Caco-2 (cell line): ENCODE measurements at regions of chr4 and their contacts with region 1.

Region 1: DNA sequence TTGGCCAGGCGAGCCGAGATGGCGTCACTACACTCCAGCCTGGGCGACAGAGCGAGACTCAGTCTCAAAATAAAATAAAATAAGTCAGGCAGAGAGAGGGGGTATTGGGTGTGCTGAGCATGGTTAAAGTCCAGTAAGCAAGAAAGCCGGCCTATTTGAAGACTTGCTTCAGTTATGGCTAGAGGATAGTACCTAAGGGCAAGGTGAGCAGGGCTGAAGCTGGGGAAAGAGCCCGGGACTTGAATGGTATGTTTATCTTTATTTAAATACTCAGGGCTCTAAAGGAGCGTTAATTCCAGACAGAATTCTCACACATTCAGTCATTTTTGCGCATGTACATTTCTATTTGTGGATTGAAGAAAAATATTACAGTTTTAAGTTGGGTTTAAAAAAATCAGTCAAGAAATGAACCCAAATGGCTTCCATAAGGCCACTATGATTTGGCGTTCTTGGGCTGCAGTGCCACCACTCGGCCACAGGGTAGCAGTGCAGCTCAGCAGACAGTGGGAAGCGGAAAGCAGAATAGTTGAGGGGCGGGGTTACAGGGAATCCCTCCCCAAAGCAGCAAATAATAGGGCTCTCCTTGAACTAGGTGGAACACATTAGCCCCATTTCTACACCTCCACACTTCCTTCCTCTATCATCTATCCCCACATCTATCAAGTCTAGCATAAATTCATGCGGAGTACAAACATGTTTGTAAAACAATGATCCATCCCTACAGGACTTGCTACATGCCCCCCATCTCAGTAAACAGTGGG is 37.2 kb upstream of the SH3D19 start:
- DNase-seq: peak; percentile 86 to 88
- H3K4me3 ChIP-seq: no peak overlapping the region
- H3K4me3 Mint-ChIP-seq: no peak overlapping the region
- H3K27ac Mint-ChIP-seq: no peak overlapping the region
- H3K4me1 ChIP-seq: no peaks in the 10 kb centered on the region
- H3K4me1 Mint-ChIP-seq: peaks cover 12% of the 10 kb centered on the region
- H3K27me3 ChIP-seq: no peaks in the 10 kb centered on the region
- H3K27me3 Mint-ChIP-seq: no peaks in the 10 kb centered on the region
- CTCF ChIP-seq: peak; percentile 90 to 97

Region 2: GRCh38 chr4:150583287-150584110 is 779.1 kb before region 1 on chr4:
- CTCF ChIA-PET with region 1: no interaction called
- POLR2A ChIA-PET with region 1: no interaction called
- intact Hi-C with region 1: no loop called
- DNase-seq: no peak
- H3K4me3 ChIP-seq: no peak overlapping the region
- H3K4me3 Mint-ChIP-seq: no peak overlapping the region
- H3K27ac Mint-ChIP-seq: no peak overlapping the region
- H3K4me1 ChIP-seq: no peaks in the 10 kb centered on the region
- H3K4me1 Mint-ChIP-seq: no peaks in the 10 kb centered on the region
- H3K27me3 ChIP-seq: no peaks in the 10 kb centered on the region
- H3K27me3 Mint-ChIP-seq: no peaks in the 10 kb centered on the region
- CTCF ChIP-seq: no peak

Region 3: DNA sequence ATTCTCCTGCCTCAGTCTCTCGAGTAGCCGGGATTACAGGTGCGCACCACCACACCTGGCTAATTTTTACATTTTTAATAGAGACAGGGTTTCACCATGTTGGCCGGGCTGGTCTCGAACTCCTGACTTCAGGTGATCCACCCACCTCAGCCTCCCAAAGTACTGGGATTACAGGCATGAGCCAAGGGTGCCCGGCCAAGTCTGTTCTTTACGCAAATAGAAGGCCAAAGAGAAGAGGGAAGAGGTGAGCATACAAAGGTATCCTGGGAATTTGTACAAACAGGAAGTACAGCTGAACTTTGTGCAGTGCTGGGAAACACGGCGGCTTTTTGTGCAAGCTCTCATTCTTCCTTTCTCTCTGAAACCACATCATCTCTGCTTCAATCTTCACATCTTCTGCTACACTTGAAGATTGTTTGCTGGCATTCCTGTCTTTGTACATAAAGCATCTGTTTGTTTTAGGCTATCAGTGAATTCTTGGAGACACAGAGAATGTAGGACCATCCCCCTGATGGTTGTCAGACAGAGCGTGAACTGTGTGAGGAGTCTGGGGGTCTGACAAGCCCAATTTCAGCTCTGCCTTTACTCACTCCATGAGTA is 157.6 kb before region 1 on chr4:
- CTCF ChIA-PET with region 1: no interaction called
- POLR2A ChIA-PET with region 1: no interaction called
- intact Hi-C with region 1: loop called (anchors 1 kb)
- DNase-seq: peak; percentile 70 to 79
- H3K4me3 ChIP-seq: no peak overlapping the region; the same call in 1 of the 2 replicates
- H3K4me3 Mint-ChIP-seq: peak overlapping the region; percentile 67
- H3K27ac Mint-ChIP-seq: peak overlapping the region; percentile 79
- H3K4me1 ChIP-seq: peaks cover 57% of the 10 kb centered on the region
- H3K4me1 Mint-ChIP-seq: peaks cover 23% of the 10 kb centered on the region
- H3K27me3 ChIP-seq: no peaks in the 10 kb centered on the region
- H3K27me3 Mint-ChIP-seq: no peaks in the 10 kb centered on the region
- CTCF ChIP-seq: no peak

Region 4: DNA sequence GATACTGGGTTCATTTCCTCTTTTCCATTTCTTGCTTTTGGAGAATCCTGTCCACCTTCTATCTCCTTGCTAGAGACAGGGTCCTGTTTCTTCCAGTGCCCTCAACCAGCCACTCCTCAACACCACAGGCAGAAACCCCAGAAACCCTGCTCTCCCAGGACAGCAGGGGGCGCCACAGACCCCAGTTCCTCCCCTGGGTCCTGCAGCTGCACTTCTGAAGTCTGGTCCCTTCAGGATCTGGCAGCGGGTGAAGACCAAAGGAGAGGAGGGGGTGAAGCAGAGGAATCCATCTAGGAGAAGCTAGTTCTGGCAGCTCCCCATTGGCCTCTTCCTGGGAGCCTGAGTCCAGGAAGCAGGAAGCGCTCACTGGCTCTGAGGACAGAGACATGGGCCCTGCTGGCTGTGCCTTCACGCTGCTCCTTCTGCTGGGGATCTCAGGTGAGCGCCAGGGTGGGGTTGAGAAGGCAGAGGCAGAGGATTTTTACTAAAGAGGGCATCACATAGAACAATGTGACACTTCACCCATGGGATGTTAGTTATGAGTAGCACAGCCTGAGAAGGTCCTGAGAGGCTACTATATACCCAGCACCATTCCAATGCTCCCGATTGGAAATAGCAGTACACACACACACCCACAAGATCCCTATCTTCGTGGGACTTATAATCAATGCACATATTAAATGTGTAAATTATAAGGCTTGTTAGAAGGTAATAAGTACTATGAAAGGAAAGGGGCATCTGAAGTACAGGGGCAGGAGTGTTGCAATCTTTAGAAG is 85.6 kb before region 1 on chr4 and contains the start of gene PRSS48:
- CTCF ChIA-PET with region 1: interaction called, 9 read pairs
- POLR2A ChIA-PET with region 1: no interaction called
- intact Hi-C with region 1: loop called (anchors 1 kb)
- DNase-seq: peak; percentile 74 to 85
- H3K4me3 ChIP-seq: no peak within 1 kb of the TSS
- H3K4me3 Mint-ChIP-seq: no peak within 1 kb of the TSS
- H3K27ac Mint-ChIP-seq: peak within 1 kb of the TSS; percentile 49
- H3K4me1 ChIP-seq: peaks cover 9% of the 10 kb centered on the region
- H3K4me1 Mint-ChIP-seq: peaks cover 33% of the 10 kb centered on the region
- H3K27me3 ChIP-seq: no peaks in the 10 kb centered on the region
- H3K27me3 Mint-ChIP-seq: no peaks in the 10 kb centered on the region
- CTCF ChIP-seq: peak; percentile 75 to 80
- total RNA-seq, gene PRSS48: not detected in 2 replicates

Region 5: DNA sequence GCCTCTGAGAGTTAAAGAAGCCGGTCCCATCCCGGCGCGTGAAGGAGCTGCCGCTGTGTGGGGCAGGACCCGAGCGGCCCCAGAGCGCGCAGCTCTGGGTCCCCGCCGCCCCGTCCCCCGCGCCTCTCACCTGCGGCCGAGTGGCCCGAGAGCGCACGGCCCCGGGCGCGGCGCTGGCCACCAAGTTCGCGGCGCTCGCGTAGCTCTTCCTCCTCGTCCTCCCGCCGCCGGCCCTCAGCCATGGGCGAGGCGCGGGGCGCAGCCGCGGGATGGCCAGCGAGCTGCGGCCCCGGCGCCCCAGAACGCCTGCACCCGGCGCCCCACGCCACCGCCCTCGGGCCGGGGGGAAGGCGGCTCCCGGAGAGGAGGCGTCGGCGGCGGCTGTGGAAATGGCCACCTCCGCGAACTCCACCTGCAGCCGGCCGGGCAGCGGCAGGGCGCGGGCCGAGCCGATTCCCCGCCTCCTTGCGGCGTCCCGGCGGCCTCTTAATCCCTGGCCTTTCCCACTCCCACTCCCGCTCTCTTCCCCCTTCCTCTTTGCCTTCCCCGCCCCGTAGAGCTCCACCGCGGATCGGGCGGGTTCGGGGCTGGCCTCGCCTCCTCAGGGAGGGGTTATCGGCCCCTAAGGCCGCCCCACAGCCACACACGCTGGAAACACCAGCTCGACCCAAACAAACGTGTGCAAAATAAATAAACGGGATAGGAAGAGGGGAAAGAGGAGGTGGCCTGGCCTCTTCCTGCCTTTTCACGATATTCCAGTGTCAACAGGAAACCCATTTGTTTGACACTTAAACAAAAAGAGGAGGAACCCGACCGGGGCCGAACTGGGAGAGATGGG is 37.3 kb before region 1 on chr4 and contains the start of gene SH3D19:
- CTCF ChIA-PET with region 1: interaction called, 8 read pairs
- POLR2A ChIA-PET with region 1: interaction called, 6 read pairs
- intact Hi-C with region 1: loop called (anchors 1 kb)
- DNase-seq: peak; percentile 88 to 90
- H3K4me3 ChIP-seq: peak within 1 kb of the TSS; percentile 59
- H3K4me3 Mint-ChIP-seq: peak within 1 kb of the TSS; percentile 86
- H3K27ac Mint-ChIP-seq: peak within 1 kb of the TSS; percentile 89
- H3K4me1 ChIP-seq: peaks cover 31% of the 10 kb centered on the region
- H3K4me1 Mint-ChIP-seq: peaks cover 34% of the 10 kb centered on the region
- H3K27me3 ChIP-seq: no peaks in the 10 kb centered on the region
- H3K27me3 Mint-ChIP-seq: no peaks in the 10 kb centered on the region
- CTCF ChIP-seq: no peak
- total RNA-seq, gene SH3D19: 57.2 and 57.8 TPM in 2 replicates

Region 6: GRCh38 chr4:151408630-151409469 is 46.3 kb after region 1 on chr4 and contains the start of gene FHIP1A:
- CTCF ChIA-PET with region 1: no interaction called
- POLR2A ChIA-PET with region 1: no interaction called
- intact Hi-C with region 1: loop called (anchors 1 kb)
- DNase-seq: peak; percentile 95 to 96
- H3K4me3 ChIP-seq: peak within 1 kb of the TSS; percentile 80
- H3K4me3 Mint-ChIP-seq: peak within 1 kb of the TSS; percentile 86
- H3K27ac Mint-ChIP-seq: peak within 1 kb of the TSS; percentile 85
- H3K4me1 ChIP-seq: peaks cover 11% of the 10 kb centered on the region; the same call in 1 of the 2 replicates
- H3K4me1 Mint-ChIP-seq: no peaks in the 10 kb centered on the region
- H3K27me3 ChIP-seq: no peaks in the 10 kb centered on the region
- H3K27me3 Mint-ChIP-seq: no peaks in the 10 kb centered on the region
- CTCF ChIP-seq: peak in 1 of 2 experiments; percentile 12
- total RNA-seq, gene FHIP1A: 18.9 and 22.3 TPM in 2 replicates

Region 7: DNA sequence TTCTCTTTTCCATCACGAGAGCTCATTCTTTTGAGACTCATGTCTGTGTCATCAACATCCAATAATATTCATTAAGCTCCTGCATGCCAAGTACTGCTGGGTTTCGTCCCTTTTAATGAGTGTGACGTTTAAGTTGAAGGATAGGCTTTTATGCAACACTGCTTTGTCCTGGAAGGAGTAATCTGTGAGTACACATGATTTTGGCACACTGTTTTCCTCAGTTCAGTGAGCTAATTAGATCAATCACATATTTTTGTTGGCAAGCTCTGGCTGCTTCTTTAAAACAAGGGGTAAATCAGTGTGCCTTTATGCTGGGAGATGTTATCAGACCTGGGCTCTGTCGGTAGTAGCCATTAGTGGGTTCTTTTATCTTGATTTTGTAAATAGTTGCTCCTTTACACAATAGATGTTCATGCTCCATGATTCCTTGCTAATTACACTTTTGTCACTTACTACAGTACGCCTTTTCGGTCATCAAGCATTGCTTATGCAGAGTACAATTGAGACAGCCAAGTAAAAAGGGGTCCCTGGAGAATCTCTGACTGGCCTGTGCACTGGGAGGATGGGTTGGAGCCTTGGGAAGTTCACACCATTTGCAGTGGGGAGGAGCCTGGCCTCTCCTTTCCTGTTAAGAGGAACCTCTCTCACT is 179.0 kb after region 1 on chr4:
- CTCF ChIA-PET with region 1: no interaction called
- POLR2A ChIA-PET with region 1: no interaction called
- intact Hi-C with region 1: no loop called
- DNase-seq: no peak
- H3K4me3 ChIP-seq: no peak overlapping the region
- H3K4me3 Mint-ChIP-seq: no peak overlapping the region
- H3K27ac Mint-ChIP-seq: no peak overlapping the region
- H3K4me1 ChIP-seq: no peaks in the 10 kb centered on the region
- H3K4me1 Mint-ChIP-seq: no peaks in the 10 kb centered on the region
- H3K27me3 ChIP-seq: no peaks in the 10 kb centered on the region
- H3K27me3 Mint-ChIP-seq: no peaks in the 10 kb centered on the region
- CTCF ChIP-seq: no peak

Region 8: GRCh38 chr4:151614561-151614960 is 252.0 kb after region 1 on chr4:
- CTCF ChIA-PET with region 1: no interaction called
- POLR2A ChIA-PET with region 1: no interaction called
- intact Hi-C with region 1: loop called (anchors 1 kb)
- DNase-seq: no peak
- H3K4me3 ChIP-seq: no peak overlapping the region
- H3K4me3 Mint-ChIP-seq: no peak overlapping the region
- H3K27ac Mint-ChIP-seq: no peak overlapping the region
- H3K4me1 ChIP-seq: no peaks in the 10 kb centered on the region
- H3K4me1 Mint-ChIP-seq: no peaks in the 10 kb centered on the region
- H3K27me3 ChIP-seq: no peaks in the 10 kb centered on the region
- H3K27me3 Mint-ChIP-seq: no peaks in the 10 kb centered on the region
- CTCF ChIP-seq: no peak